ENCODE measurements at regions of chr10 and their contacts with region 1.

Region 1: DNA sequence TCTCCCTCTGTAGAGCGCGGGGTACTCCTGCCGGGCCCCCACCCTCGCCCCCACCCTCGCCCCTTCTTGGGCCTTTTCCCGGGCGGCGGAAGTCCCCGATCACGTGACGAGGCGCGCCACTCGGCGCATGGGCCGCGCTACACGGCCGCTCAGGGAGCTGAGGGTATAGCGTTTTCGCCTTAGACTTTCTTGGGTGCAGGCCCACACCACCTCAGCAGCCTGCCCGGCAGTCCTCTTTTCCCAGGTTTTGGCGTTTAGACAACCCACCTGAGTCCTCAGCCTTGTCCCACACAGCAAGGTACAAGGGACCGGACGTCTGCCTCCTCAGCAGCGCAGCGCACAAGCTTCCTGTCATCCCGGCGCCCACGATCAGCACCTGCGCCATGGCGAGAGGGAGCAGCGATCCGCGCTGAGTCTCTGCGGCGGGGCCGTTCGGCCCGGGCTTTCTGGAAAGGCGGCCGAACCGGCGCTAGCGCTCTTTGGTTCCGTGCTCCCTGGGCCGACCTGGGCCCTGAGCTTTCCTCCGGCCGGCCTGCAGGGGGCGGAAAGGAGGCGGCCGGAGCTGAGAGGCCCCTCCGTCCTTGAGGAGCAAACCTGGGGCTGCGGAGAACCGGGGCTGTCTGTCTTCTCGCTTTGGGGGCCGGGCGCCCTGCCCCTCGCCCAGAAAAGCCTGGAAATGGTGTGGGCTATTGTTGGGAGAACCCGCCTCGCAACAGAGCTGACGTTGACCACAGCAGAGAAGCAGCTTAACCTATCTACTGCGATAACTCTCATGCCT is at the start of gene RNLS:
- DNase-seq: peak; percentile 21 to 84 (median 65)
- ATAC-seq: peak; percentile 83
- H3K4me3 ChIP-seq: peak within 1 kb of the TSS; percentile 83
- H3K4me3 Mint-ChIP-seq: peak within 1 kb of the TSS; percentile 91
- H3K27ac ChIP-seq: peak within 1 kb of the TSS; percentile 72 to 83
- H3K27ac Mint-ChIP-seq: peak within 1 kb of the TSS; percentile 92
- H3K4me1 ChIP-seq: peaks cover 7% of the 10 kb centered on the region
- H3K4me1 Mint-ChIP-seq: peaks cover 11% of the 10 kb centered on the region
- H3K27me3 ChIP-seq: no peaks in the 10 kb centered on the region
- H3K27me3 Mint-ChIP-seq: peaks cover 3% of the 10 kb centered on the region
- CTCF ChIP-seq: peak; percentile 61
- total RNA-seq, gene RNLS: 1.6 to 1.7 TPM

Region 2: DNA sequence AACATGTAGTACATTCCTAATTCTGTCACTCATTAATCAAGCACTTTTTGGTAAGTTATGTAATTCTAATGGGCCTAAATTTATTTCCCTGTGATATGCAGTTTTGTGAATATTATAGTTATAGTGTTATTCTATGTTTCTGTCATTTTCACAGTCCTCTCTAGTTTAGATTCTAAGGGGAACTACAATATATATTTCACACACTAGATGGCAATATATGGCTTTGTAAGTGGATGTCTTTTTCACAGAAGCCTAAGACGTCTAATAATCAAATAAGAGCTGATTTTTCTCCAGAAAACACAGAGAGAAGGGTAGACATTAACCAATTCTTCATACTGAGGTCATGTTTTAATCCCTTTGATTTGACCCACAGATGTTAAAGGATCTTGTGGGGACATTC is 17.9 kb before region 1 on chr10:
- CTCF ChIA-PET with region 1: interaction called, 11 read pairs
- POLR2A ChIA-PET with region 1: interaction called, 4 read pairs
- intact Hi-C with region 1: no loop called
- DNase-seq: peak in 2 of 9 experiments; percentile 17 to 29
- ATAC-seq: no peak
- H3K4me3 ChIP-seq: no peak overlapping the region
- H3K4me3 Mint-ChIP-seq: no peak overlapping the region
- H3K27ac ChIP-seq: no peak overlapping the region
- H3K27ac Mint-ChIP-seq: no peak overlapping the region
- H3K4me1 ChIP-seq: no peaks in the 10 kb centered on the region
- H3K4me1 Mint-ChIP-seq: peaks cover 4% of the 10 kb centered on the region
- H3K27me3 ChIP-seq: no peaks in the 10 kb centered on the region
- H3K27me3 Mint-ChIP-seq: no peaks in the 10 kb centered on the region
- CTCF ChIP-seq: peak; percentile 31

Region 3: DNA sequence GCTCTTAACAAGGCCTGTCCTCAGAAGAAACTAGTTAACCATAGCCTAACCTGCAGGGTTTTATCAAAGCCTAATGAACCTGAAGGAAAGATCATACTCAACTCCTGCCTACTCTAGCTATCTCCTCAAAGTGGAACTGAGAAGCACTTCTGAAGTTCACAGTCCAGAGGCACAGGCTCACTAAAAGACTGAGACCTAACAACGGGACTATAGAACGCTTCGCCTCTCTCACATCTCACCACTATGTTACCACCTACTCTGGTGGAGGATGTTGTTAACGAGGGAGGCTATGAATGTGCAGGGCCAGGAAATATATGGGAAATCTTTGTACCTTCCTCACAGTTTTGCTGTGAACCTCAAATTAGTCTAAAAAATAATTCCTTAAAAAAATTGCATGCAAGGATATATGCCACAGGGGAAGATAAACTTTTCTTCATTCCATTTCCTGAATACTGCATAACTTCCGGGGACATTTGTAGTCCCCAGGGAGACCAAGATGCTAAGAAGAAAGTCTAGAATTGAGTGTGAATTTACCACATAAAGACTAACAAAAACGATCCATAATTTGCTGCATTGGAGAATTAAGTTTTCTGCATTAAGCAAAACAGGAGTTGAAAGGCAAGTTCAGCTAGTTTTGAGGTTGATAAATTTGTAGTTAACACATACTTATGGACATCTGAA is 25.2 kb after region 1 on chr10:
- CTCF ChIA-PET with region 1: no interaction called
- POLR2A ChIA-PET with region 1: no interaction called
- intact Hi-C with region 1: no loop called
- DNase-seq: no peak
- ATAC-seq: no peak
- H3K4me3 ChIP-seq: no peak overlapping the region
- H3K4me3 Mint-ChIP-seq: no peak overlapping the region
- H3K27ac ChIP-seq: no peak overlapping the region
- H3K27ac Mint-ChIP-seq: no peak overlapping the region
- H3K4me1 ChIP-seq: no peaks in the 10 kb centered on the region
- H3K4me1 Mint-ChIP-seq: no peaks in the 10 kb centered on the region
- H3K27me3 ChIP-seq: no peaks in the 10 kb centered on the region
- H3K27me3 Mint-ChIP-seq: peaks cover 2% of the 10 kb centered on the region
- CTCF ChIP-seq: no peak

Region 4: GRCh38 chr10:88651101-88651551 is 68.1 kb after region 1 on chr10:
- CTCF ChIA-PET with region 1: no interaction called
- POLR2A ChIA-PET with region 1: no interaction called
- intact Hi-C with region 1: no loop called
- DNase-seq: no peak
- ATAC-seq: no peak
- H3K4me3 ChIP-seq: no peak overlapping the region
- H3K4me3 Mint-ChIP-seq: no peak overlapping the region
- H3K27ac ChIP-seq: no peak overlapping the region
- H3K27ac Mint-ChIP-seq: no peak overlapping the region
- H3K4me1 ChIP-seq: no peaks in the 10 kb centered on the region
- H3K4me1 Mint-ChIP-seq: no peaks in the 10 kb centered on the region
- H3K27me3 ChIP-seq: no peaks in the 10 kb centered on the region
- H3K27me3 Mint-ChIP-seq: peaks cover 10% of the 10 kb centered on the region
- CTCF ChIP-seq: no peak

Region 5: GRCh38 chr10:88687853-88688467 is 105.0 kb after region 1 on chr10:
- CTCF ChIA-PET with region 1: no interaction called
- POLR2A ChIA-PET with region 1: no interaction called
- intact Hi-C with region 1: no loop called
- DNase-seq: peak in 2 of 9 experiments; percentile 24 to 43
- ATAC-seq: no peak
- H3K4me3 ChIP-seq: no peak overlapping the region
- H3K4me3 Mint-ChIP-seq: no peak overlapping the region
- H3K27ac ChIP-seq: no peak overlapping the region
- H3K27ac Mint-ChIP-seq: no peak overlapping the region
- H3K4me1 ChIP-seq: no peaks in the 10 kb centered on the region
- H3K4me1 Mint-ChIP-seq: no peaks in the 10 kb centered on the region
- H3K27me3 ChIP-seq: no peaks in the 10 kb centered on the region
- H3K27me3 Mint-ChIP-seq: peaks cover 3% of the 10 kb centered on the region
- CTCF ChIP-seq: peak; percentile 96